Lower leg skin (tissue), 4 donors: ENCODE measurements at regions of chr15 and their contacts with region 1.

Region 1: GRCh38 chr15:89794627-89795241 is 18.6 kb downstream of the MESP2 start:
- DNase-seq: no peak
- H3K4me3 ChIP-seq: no peak overlapping the region
- CTCF ChIP-seq: no peak
- POLR2A ChIP-seq: no peak

Region 2: DNA sequence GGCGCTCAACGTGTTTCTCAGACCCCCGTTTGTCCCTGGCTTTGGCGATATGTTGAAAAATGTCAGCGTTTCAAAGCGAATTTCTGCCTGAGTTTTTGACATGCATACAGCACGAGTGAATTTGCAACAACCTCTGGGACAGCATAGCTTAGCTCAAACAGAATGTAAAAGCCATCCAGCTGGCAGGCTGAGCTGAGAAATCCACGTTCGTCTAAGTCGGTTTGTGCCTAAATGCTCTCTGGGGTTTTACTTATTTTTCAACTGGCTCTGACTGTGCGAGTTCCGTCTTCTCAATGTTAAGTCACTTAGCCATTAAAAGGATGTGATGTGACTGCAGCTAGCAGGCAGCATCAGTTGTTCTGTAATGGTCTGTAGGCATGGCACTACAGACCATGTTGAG is 1815.2 kb after region 1 on chr15:
- intact Hi-C with region 1: loop called (anchors 5 kb)
- DNase-seq: no peak
- H3K4me3 ChIP-seq: no peak overlapping the region
- CTCF ChIP-seq: no peak
- POLR2A ChIP-seq: no peak